Ovary (tissue), 10 donors: ENCODE measurements at regions of chr2 and their contacts with region 1.

Region 1: GRCh38 chr2:183038341-183039300 is at the start of gene NCKAP1:
- DNase-seq: peak; percentile 90 to 96 (median 94)
- H3K4me3 ChIP-seq: peak within 1 kb of the TSS; percentile 95
- H3K27ac ChIP-seq: peak within 1 kb of the TSS; percentile 99 to 100
- H3K4me1 ChIP-seq: peaks cover 1% of the 10 kb centered on the region
- H3K27me3 ChIP-seq: no peaks in the 10 kb centered on the region
- CTCF ChIP-seq: peak; percentile 72 to 99 (median 99)
- EP300 ChIP-seq: no peak
- POLR2A ChIP-seq: peak; percentile 59
- total RNA-seq, gene NCKAP1: 78.7 to 122 (median 109) TPM

Region 2: DNA sequence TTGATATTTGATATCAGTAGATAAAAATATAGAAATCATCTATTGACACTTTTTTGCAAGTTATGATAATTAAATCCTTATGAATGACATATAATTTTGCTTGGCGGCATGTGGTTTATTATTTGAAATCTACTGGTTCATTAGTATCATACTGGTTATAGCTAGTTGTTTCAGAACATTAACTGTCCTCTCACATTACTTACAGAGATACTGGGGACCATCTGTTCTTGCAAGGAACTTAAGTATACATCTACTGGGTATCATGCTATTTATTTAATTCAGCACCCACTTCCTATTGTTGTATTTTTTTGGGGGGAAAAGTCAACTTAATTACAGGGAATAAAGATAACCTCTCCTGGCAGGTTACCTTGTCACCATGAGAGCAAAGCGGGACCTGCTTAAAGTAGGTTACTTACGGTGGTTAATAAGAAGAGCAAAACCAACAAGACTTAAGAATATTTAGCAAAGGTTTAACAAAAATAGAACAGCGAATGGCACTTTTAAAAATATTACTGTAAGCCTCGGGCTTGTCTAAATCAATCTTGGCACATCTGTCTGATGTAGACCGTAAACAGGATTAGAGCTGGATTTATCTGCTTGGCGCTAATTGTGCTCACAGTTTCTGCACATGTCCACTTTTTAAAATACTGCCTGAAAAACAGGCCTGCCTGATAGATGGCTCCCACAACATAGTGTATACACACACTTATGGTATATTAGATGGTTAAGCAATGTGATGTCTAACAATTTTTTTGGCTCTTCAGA is 1423.6 kb before region 1 on chr2:
- intact Hi-C with region 1: no loop called
- DNase-seq: no peak
- H3K4me3 ChIP-seq: no peak overlapping the region
- H3K27ac ChIP-seq: no peak overlapping the region
- H3K4me1 ChIP-seq: no peaks in the 10 kb centered on the region
- H3K27me3 ChIP-seq: no peaks in the 10 kb centered on the region
- CTCF ChIP-seq: no peak
- EP300 ChIP-seq: no peak
- POLR2A ChIP-seq: no peak

Region 3: GRCh38 chr2:183124222-183124956 is 85.8 kb after region 1 on chr2 and contains the start of gene NUP35:
- intact Hi-C with region 1: loop called in 1 of 4 experiments (anchors 5 kb)
- DNase-seq: peak; percentile 79 to 92 (median 88)
- H3K4me3 ChIP-seq: peak within 1 kb of the TSS; percentile 87
- H3K27ac ChIP-seq: peak within 1 kb of the TSS; percentile 20 to 64
- H3K4me1 ChIP-seq: peaks cover 6% of the 10 kb centered on the region
- H3K27me3 ChIP-seq: no peaks in the 10 kb centered on the region
- CTCF ChIP-seq: no peak
- EP300 ChIP-seq: no peak
- POLR2A ChIP-seq: no peak
- total RNA-seq, gene NUP35: 15.2 to 28.5 (median 19.7) TPM